Ovary (tissue), 10 donors: ENCODE measurements at regions of chr6 and their contacts with region 1.

Region 1: GRCh38 chr6:110938171-110938570 is 20.3 kb upstream of the GTF3C6 start:
- DNase-seq: no peak
- H3K4me3 ChIP-seq: no peak overlapping the region
- H3K27ac ChIP-seq: no peak overlapping the region
- H3K4me1 ChIP-seq: no peaks in the 10 kb centered on the region
- H3K27me3 ChIP-seq: no peaks in the 10 kb centered on the region
- CTCF ChIP-seq: no peak
- EP300 ChIP-seq: no peak
- POLR2A ChIP-seq: no peak

Region 2: DNA sequence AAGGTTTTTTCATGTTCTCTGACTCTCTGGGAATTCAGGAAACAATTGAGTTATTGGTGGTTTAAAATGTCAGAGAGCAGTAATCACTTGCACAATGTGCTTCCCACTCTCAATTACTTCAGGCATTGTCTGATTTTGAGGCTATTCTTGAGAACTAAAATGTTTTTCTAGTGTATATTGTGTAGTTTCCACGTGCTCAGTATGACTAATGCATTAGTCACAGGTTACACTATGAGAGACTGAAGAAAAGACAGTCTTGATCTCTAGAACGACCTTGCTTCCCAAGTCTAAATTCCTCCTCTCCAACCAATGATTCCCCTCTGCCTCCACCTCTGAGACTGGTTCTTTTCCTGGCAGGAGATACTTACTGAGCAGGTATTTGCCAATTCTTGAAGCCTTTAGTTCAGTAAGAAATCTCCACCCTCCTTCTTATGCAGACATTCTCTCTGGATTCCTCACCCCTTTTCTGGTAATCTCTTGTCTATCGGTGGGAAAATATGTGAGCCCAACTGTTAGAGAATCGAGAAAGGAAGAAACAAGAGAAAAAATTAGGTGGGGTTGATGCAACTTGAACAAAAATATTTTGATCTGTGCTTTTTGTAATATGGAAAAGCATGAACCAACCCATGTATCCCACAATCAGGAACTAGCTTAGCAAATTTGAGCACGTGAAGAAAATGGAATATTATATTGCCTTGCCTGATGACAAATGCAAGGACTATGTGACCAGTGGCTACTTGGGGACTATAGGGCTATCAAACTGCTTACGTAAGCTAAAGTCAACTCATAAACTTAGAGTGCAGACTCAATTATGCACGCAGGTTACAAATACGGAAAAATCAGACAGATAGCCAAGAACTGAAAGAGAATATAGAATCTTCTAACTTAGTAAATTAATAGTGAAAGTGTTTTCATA is 400.7 kb before region 1 on chr6:
- intact Hi-C with region 1: loop called in 1 of 4 experiments (anchors 10 kb)
- DNase-seq: no peak
- H3K4me3 ChIP-seq: no peak overlapping the region
- H3K27ac ChIP-seq: peak overlapping the region in 1 of 2 donors; percentile 16
- H3K4me1 ChIP-seq: no peaks in the 10 kb centered on the region
- H3K27me3 ChIP-seq: no peaks in the 10 kb centered on the region
- CTCF ChIP-seq: no peak
- EP300 ChIP-seq: no peak
- POLR2A ChIP-seq: no peak

Region 3: GRCh38 chr6:110890288-110890687 is 47.9 kb before region 1 on chr6:
- intact Hi-C with region 1: no loop called
- DNase-seq: no peak
- H3K4me3 ChIP-seq: no peak overlapping the region
- H3K27ac ChIP-seq: no peak overlapping the region
- H3K4me1 ChIP-seq: peaks cover 3% of the 10 kb centered on the region
- H3K27me3 ChIP-seq: no peaks in the 10 kb centered on the region
- CTCF ChIP-seq: no peak
- EP300 ChIP-seq: no peak
- POLR2A ChIP-seq: no peak